Activated B cell treated with CpG ODN at 0.5 μM for 24 hours (primary cell): ENCODE measurements at regions of chr12 and their contacts with region 1.

Region 1: GRCh38 chr12:31966558-31967205 is 7.5 kb downstream of the RESF1 start:
- DNase-seq: no peak
- ATAC-seq: no peak
- H3K4me3 Mint-ChIP-seq: peak overlapping the region; percentile 28
- H3K27ac Mint-ChIP-seq: peak overlapping the region; percentile 64
- H3K4me1 Mint-ChIP-seq: peaks cover 91% of the 10 kb centered on the region
- H3K27me3 Mint-ChIP-seq: no peaks in the 10 kb centered on the region
- CTCF ChIP-seq: no peak

Region 2: DNA sequence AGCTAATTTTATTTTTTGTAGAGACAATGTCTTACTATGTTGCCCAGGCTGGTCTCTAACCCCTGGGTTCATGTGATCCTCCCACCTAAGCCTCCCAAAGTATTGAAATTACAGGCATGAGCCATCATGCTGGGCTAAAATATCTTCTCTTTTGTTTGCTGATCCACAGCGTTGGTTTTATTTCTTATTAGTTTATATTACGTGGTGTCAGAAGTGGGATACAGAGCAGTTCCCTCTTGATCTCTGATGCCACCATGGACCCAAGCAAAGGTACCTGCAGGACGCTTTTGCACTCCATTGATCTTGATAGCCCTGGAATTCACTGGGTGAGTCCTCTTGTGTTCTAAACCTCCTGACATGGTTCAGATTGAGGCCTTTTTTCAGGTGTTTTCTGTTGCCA is 51.2 kb before region 1 on chr12:
- CTCF ChIA-PET with region 1: no interaction called
- POLR2A ChIA-PET with region 1: no interaction called
- intact Hi-C with region 1: no loop called
- DNase-seq: no peak
- ATAC-seq: no peak
- H3K4me3 Mint-ChIP-seq: no peak overlapping the region
- H3K27ac Mint-ChIP-seq: no peak overlapping the region
- H3K4me1 Mint-ChIP-seq: no peaks in the 10 kb centered on the region
- H3K27me3 Mint-ChIP-seq: no peaks in the 10 kb centered on the region
- CTCF ChIP-seq: no peak

Region 3: DNA sequence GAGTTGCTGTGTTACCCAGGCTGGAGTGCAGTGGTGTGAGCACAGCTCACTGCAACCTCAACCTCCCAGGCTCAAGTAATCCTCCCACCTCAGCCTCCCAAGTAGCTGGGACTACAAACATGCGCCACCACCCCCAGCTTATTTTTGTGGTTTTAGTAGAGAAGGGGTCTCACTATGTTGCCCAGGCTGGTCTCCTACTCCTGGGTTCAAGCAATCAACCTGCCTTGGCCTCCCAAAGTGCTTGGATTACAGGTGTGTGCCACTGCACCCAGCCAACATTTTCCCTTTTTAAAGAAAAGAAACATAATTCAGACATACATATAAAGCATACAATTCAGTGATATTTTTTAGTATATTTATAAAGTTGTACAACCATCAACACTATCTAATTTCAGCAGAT is 37.0 kb after region 1 on chr12:
- CTCF ChIA-PET with region 1: no interaction called
- POLR2A ChIA-PET with region 1: interaction called, 12 read pairs
- intact Hi-C with region 1: no loop called
- DNase-seq: no peak
- ATAC-seq: no peak
- H3K4me3 Mint-ChIP-seq: no peak overlapping the region
- H3K27ac Mint-ChIP-seq: no peak overlapping the region
- H3K4me1 Mint-ChIP-seq: peaks cover 7% of the 10 kb centered on the region
- H3K27me3 Mint-ChIP-seq: no peaks in the 10 kb centered on the region
- CTCF ChIP-seq: no peak